Left cardiac atrium (tissue), 4 donors: ENCODE measurements at regions of chr1 and their contacts with region 1.

Region 1: GRCh38 chr1:43529206-43529731 is 1.4 kb upstream of the PTPRF start:
- DNase-seq: peak; percentile 85
- ATAC-seq: peak; percentile 51 to 56

Region 2: DNA sequence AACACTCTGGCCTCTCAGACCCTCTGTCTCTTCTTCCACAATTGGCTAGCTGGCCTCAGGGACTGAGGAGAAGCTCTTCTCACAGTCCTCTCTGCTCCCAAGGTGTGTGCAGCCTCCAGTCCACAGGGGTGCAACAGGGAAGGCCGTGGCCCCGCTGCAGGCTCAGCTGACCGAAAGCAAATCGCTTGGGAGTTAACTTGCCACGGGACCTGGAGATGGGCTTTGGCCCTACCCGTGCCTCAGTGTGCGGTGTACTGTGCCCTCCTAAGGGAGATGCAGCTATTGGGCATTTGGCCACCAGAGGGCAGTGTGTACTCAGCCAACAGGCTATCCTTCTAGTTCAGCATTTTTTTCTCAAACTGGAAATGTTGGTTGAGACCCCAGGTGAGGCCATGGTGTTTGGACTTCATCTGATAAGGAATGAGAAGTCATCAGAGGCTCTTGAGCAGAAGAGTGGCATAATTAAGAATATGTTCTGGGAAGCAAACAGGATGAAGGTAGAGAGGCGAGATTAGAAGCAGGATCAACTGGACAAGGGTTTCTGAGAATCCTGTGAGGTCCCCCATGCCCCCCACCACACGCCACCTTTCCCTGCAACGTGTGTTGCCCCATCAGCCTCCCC is 302.0 kb before region 1 on chr1:
- intact Hi-C with region 1: loop called in 1 of 2 experiments (anchors 5 kb)
- DNase-seq: peak; percentile 85
- ATAC-seq: peak; percentile 73 to 84

Region 3: DNA sequence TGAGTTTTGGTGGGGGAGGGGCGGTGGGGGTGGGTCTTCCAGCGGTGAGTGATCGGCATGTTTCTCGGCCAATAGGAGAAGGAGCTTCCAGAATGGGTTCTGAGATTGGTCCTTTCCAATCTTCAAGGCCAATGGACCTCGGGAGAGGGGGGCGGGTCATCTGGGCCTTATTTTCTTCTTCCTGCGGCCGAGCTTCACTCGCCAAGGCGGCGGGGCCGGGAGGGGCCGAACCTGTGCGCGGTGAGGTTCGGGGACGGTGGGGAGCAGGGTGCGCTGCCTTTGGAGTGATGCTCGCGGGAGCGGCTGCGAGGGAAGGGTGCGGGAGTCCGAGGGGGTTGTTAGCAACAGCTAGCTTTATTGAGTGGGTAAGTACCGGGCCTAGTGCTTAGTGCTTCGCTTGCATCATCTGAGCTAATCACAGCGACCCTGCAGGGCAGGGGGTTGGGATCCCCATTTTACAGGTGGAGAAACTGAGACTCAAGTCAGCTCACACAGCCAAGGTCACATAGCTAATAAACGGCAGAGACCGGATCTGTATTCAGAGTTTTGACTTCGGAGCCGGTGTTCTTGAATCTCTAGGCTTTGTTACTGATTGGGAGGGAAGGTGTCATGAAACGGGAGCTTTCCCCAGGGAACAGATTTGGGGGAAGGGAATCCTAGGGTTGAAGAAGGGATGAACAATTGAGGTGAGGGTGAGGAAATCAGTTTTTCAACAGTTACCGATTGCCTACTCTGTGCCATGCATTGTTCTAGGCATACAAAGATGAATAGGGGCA is 121.2 kb after region 1 on chr1:
- intact Hi-C with region 1: loop called (anchors 2 to 10 kb)
- DNase-seq: peak; percentile 95
- ATAC-seq: peak; percentile 91 to 94

Region 4: GRCh38 chr1:43763497-43763973 is 234.3 kb after region 1 on chr1:
- intact Hi-C with region 1: loop called in 1 of 2 experiments (anchors 10 kb)
- DNase-seq: peak; percentile 54
- ATAC-seq: peak; percentile 94 to 96

Region 5: DNA sequence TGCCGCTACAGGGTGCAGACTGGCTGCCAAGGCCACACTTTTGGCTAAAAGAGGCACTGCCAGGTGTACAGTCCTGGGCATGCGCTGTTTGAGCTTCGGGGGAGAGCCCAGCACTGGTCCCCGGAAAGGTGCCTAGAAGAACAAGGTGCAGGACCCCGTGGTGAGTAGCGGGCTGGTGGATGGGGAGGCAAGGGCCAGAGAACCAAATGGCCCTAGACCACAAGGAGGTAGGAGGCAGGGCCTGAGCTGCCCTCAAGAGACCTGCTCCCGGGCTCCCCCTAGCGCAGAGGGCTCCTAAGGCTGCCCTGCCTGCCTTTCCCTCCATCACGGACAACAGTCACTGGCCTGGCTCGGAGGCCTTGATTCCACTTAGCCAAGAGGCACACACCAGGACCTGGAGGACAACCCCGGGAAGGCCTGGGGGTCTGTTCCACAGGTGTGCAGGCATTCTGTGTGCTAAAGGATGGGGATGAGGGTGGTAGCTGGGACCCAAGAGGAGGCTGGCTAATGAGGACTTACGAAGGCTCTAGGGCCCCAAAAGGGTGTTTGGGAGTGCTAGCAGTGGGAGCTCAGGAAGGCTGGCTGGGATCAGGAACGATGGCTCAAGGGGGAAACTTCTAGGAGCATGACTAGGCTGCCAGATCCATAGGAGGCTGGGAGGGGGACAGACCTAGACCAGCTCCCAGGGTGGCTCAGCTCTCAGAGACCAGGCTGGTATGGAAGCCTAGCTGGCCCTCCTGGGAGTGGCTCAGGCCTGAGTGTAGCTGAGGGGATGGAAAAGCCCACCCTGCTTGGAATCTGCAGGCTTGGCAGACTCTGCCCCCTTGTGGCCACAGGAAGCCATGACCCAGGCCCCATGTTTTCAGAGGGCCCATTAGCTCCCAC is 405.1 kb after region 1 on chr1:
- intact Hi-C with region 1: loop called in 1 of 2 experiments (anchors 5 kb)
- DNase-seq: peak; percentile 54
- ATAC-seq: peak; percentile 54 to 67

Region 6: GRCh38 chr1:44036409-44037139 is 507.3 kb after region 1 on chr1:
- intact Hi-C with region 1: loop called in 1 of 2 experiments (anchors 5 kb)
- DNase-seq: peak; percentile 68
- ATAC-seq: peak; percentile 72 to 74